HEK293 (cell line): ENCODE measurements at regions of chr11 and their contacts with region 1.

Region 1: DNA sequence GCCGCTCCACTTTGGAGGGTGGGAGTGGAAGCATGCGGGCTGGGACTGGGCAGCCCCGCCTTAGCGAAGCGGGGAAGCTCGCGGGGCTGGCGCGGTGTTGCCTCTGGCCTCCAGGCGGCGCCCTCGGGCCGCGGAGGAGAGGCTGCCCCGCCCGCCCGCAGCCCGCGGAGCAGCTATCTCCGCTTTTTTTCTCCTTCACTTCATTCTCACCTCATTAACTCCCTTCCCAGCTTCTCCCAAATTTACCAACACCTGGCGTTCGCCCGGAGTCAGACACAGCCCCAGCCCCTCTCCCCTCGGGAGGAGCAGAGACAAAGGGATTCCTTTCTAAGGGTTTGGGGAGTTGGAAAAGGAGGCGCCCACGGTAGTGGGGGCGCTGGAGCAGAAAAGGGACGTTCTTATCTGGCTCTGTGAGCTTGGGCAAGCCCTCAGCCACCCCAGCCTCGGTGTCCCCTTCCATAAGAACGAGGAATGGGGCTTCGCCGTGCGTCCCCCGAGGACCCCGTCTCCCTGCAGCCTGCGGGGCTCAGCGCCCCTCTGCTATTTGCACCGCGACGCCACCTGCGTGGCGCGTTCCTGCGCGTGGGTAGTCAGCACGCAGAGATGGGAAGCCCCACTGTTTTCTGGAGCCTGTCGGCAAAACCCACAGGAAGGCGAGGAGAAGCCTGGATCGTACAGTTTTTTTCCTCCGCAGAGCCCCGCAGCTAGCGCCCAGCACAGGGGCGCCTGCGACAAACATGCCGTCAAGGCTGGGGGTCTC is 1.5 kb upstream of the WNT11 start:
- H3K4me3 ChIP-seq: peak overlapping the region; percentile 46
- H3K27ac ChIP-seq: no peak overlapping the region; the same call in 1 of the 2 replicates
- H3K4me1 ChIP-seq: no peaks in the 10 kb centered on the region; the same call in 1 of the 2 replicates
- CTCF ChIP-seq: peak; percentile 80

Region 2: GRCh38 chr11:75896843-75897419 is 310.9 kb before region 1 on chr11:
- CTCF ChIA-PET with region 1: interaction called, 22 read pairs
- POLR2A ChIA-PET with region 1: no interaction called
- H3K4me3 ChIP-seq: no peak overlapping the region
- H3K27ac ChIP-seq: no peak overlapping the region
- H3K4me1 ChIP-seq: no peaks in the 10 kb centered on the region
- CTCF ChIP-seq: no peak

Region 3: DNA sequence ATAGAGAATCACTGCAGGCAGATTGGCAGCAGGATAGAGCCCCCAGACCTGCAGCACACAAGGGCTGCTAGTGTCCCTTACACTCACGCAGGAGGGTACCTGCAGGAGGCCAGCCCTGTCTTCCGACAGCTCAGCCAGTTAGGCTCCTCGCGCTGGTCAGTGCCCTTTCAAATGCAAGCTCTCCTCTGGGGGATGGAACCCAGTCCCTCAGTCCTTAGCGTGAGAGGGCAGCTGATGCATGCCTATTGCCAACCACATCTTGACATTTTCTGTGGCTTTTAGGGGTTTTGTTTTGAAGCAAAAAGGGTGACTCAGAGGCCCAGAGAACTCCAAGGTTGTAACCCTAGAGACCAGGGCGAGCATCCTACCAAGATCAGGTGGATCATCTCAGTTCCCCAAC is 41.5 kb before region 1 on chr11:
- CTCF ChIA-PET with region 1: no interaction called
- POLR2A ChIA-PET with region 1: no interaction called
- H3K4me3 ChIP-seq: no peak overlapping the region
- H3K27ac ChIP-seq: no peak overlapping the region
- H3K4me1 ChIP-seq: no peaks in the 10 kb centered on the region
- CTCF ChIP-seq: no peak

Region 4: DNA sequence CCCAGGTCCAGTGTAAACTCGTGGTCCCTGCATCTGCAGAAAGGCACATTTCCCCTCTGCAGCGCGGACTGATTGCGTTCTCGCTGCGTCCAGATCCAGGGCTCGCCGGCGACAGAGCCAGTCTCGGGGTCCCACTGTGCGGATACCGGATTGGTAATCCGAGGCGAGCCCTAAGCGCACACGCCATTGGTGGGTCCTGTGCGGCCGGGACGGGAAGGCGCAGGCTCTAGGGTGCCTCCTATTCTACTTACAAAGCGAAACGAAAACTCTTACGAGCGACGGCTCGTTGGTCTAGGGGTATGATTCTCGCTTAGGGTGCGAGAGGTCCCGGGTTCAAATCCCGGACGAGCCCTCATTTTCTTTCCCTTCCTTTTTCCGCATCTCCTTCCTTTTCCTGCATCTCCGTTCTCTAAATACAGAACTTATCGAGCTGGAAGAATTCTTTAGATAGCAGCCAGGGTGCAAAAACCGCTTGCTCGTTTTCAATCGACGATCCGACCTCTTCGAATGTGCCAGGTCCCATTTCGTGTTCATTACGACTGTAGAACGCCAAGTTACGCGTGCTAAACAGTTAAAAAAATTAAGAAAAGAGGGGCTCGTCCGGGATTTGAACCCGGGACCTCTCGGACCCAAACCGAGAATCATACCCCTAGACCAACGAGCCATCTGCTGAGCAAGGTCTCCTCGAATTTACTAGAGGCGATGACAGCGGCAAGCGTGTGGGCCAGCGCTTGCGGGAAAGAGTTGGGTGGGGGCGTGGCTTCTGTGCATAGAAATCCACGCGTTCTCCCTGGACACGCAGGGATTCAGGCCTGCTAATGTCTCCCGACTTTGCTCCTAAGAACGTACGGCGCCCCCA is 27.6 kb after region 1 on chr11:
- CTCF ChIA-PET with region 1: interaction called, 11 read pairs
- POLR2A ChIA-PET with region 1: interaction called, 9 read pairs
- H3K4me3 ChIP-seq: peak overlapping the region; percentile 70
- H3K27ac ChIP-seq: no peak overlapping the region; the same call in 1 of the 2 replicates
- H3K4me1 ChIP-seq: no peaks in the 10 kb centered on the region; the same call in 1 of the 2 replicates
- CTCF ChIP-seq: no peak

Region 5: GRCh38 chr11:76243193-76243956 is 35.6 kb after region 1 on chr11:
- CTCF ChIA-PET with region 1: interaction called, 10 read pairs
- POLR2A ChIA-PET with region 1: no interaction called
- H3K4me3 ChIP-seq: no peak overlapping the region
- H3K27ac ChIP-seq: no peak overlapping the region
- H3K4me1 ChIP-seq: no peaks in the 10 kb centered on the region
- CTCF ChIP-seq: no peak

Region 6: GRCh38 chr11:76318744-76319384 is 111.0 kb after region 1 on chr11:
- CTCF ChIA-PET with region 1: interaction called, 68 read pairs
- POLR2A ChIA-PET with region 1: interaction called, 9 read pairs
- H3K4me3 ChIP-seq: no peak overlapping the region
- H3K27ac ChIP-seq: no peak overlapping the region
- H3K4me1 ChIP-seq: no peaks in the 10 kb centered on the region
- CTCF ChIP-seq: peak; percentile 57

Region 7: GRCh38 chr11:76680518-76681425 is 472.9 kb after region 1 on chr11:
- CTCF ChIA-PET with region 1: interaction called, 16 read pairs
- POLR2A ChIA-PET with region 1: no interaction called
- H3K4me3 ChIP-seq: no peak overlapping the region
- H3K27ac ChIP-seq: no peak overlapping the region
- H3K4me1 ChIP-seq: no peaks in the 10 kb centered on the region
- CTCF ChIP-seq: peak; percentile 59